ENCODE measurements at regions of chr10 and their contacts with region 1.

Region 1: DNA sequence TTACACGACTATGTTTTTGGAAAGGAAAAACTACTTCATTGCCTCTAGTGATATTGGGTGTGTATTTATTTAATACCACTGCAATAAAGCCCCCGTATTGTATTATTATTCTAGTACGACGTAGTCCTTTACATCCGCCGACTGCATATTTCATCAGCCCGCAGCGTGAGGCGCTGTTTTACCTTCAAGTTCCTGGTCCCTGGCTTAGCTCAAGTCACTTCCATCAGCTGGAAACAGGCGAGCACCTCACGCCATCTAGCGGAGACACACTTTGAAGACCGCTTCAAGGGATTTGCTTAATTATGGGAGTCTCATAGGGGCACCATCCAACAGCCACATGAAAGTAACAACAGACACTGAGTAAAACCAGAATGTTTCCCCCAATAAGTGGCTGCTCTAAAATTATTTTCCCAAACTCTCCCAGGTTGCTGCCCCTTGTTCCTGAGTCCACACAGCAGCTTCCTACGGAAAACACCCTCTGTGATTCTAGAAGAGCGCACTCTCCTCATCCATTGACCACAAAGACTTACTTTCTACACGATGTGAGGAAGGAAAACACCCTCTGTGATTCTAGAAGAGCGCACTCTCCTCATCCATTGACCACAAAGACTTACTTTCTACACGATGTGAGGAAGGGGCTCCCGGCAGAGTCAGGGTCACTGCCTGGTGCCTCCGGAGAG is 15.7 kb upstream of the ITIH2 start:
- DNase-seq: peak; percentile 65 to 88 (median 73)
- ATAC-seq: peak; percentile 95
- H3K4me3 ChIP-seq: no peak overlapping the region
- H3K4me1 ChIP-seq: no peaks in the 10 kb centered on the region
- CTCF ChIP-seq: peak; percentile 64

Region 2: DNA sequence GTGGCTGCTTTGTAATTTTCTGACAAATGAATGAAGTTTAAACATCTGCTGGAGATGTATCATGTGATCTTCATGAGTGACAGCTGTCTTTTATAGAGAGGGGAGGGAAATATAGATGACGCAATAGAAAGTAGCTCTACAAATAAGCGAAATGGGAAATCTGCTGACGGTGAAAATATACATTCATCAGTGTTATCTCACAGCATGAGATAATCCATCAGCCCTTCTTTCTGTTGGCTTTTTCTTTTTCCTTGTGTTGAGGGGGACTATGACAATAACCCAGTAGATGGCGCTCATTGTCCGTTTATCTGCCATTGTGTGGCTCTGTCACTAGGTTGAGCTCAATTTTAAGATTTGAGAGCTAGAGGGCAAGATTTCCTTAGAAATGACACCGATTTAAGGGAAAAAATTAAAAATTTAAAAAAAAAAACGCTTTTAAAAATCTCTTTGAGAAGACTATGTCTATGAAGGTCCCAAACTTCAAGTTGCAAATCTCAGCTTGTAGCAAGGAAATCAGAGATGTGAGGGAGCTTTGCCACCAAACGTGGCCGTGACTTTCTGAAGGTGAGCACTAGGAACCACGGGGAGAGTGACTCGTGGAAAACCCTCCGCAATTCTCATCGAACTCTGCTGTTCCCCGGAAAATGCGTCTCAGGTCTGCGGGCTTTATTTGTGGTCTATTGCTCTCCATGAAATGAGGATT is 161.9 kb before region 1 on chr10:
- intact Hi-C with region 1: loop called (anchors 5 kb)
- DNase-seq: peak in 1 of 3 donors; percentile 85
- ATAC-seq: peak; percentile 73
- H3K4me3 ChIP-seq: no peak overlapping the region
- H3K4me1 ChIP-seq: no peaks in the 10 kb centered on the region
- CTCF ChIP-seq: peak; percentile 46